Caco-2 (cell line): ENCODE measurements at regions of chr17 and their contacts with region 1.

Region 1: GRCh38 chr17:56939901-56940343 is 20.9 kb downstream of the COIL start:
- DNase-seq: peak in 1 of 2 experiments; percentile 76
- H3K4me3 ChIP-seq: no peak overlapping the region
- H3K4me3 Mint-ChIP-seq: no peak overlapping the region
- H3K27ac Mint-ChIP-seq: no peak overlapping the region
- H3K4me1 ChIP-seq: no peaks in the 10 kb centered on the region
- H3K4me1 Mint-ChIP-seq: peaks cover 6% of the 10 kb centered on the region
- H3K27me3 ChIP-seq: no peaks in the 10 kb centered on the region
- H3K27me3 Mint-ChIP-seq: no peaks in the 10 kb centered on the region
- CTCF ChIP-seq: peak; percentile 62 to 84

Region 2: GRCh38 chr17:56597495-56597990 is 342.4 kb before region 1 on chr17:
- CTCF ChIA-PET with region 1: no interaction called
- POLR2A ChIA-PET with region 1: no interaction called
- intact Hi-C with region 1: no loop called
- DNase-seq: no peak
- H3K4me3 ChIP-seq: no peak overlapping the region
- H3K4me3 Mint-ChIP-seq: peak overlapping the region; percentile 74
- H3K27ac Mint-ChIP-seq: no peak overlapping the region
- H3K4me1 ChIP-seq: peaks cover 29% of the 10 kb centered on the region
- H3K4me1 Mint-ChIP-seq: no peaks in the 10 kb centered on the region
- H3K27me3 ChIP-seq: peaks cover 9% of the 10 kb centered on the region
- H3K27me3 Mint-ChIP-seq: peaks cover 27% of the 10 kb centered on the region
- CTCF ChIP-seq: no peak

Region 3: DNA sequence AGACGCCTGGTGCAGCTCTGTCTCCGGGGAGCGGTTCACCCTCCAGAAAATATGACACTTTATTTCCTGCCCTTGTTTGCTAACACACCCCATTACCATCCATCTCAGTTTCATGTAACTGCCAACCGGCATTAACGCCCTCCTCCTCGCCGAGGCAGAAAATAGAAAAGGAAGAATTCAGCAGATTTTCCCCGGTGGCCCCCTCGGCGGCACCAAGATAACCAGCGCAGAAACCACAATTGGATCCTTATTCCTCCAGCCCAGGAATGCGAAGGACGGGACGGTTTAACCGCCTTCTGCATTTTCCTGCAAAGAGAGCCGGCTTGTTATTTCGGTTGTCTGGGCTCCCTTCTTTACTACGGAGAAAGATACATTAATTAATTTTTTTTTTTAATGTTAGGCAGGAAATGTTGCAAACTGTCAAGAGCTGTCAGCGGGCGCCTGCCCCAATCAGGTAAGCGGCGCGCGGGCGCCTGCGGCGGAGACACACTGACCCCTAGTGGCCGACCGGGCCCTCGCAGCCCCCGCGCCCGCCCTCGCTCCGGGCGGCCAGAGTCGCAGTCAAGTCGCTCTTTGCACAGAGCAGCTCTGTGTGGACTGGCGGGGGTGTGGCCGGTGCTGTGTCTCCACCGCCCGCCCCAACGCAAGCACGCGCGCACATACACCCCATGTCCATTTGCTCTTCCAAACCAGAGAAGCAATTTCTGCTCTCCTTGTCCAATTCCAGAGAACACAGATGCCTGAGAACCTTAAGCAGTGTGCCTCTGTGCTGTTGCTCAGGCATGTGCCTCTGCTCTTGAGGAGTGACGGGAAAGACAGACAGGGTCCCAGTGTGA is 159.8 kb before region 1 on chr17:
- CTCF ChIA-PET with region 1: no interaction called
- POLR2A ChIA-PET with region 1: no interaction called
- intact Hi-C with region 1: loop called (anchors 1 kb)
- DNase-seq: peak; percentile 75 to 90
- H3K4me3 ChIP-seq: peak overlapping the region; percentile 4; the same call in 1 of the 2 replicates
- H3K4me3 Mint-ChIP-seq: peak overlapping the region; percentile 54
- H3K27ac Mint-ChIP-seq: no peak overlapping the region
- H3K4me1 ChIP-seq: peaks cover 5% of the 10 kb centered on the region; the same call in 1 of the 2 replicates
- H3K4me1 Mint-ChIP-seq: peaks cover 6% of the 10 kb centered on the region
- H3K27me3 ChIP-seq: peaks cover 2% of the 10 kb centered on the region
- H3K27me3 Mint-ChIP-seq: peaks cover 34% of the 10 kb centered on the region
- CTCF ChIP-seq: peak; percentile 90 to 98

Region 4: GRCh38 chr17:56866496-56866895 is 73.4 kb before region 1 on chr17:
- CTCF ChIA-PET with region 1: no interaction called
- POLR2A ChIA-PET with region 1: no interaction called
- intact Hi-C with region 1: loop called (anchors 5 kb)
- DNase-seq: no peak
- H3K4me3 ChIP-seq: no peak overlapping the region
- H3K4me3 Mint-ChIP-seq: no peak overlapping the region
- H3K27ac Mint-ChIP-seq: no peak overlapping the region
- H3K4me1 ChIP-seq: 0 out of 2 replicates have a peak, but pooled peaks cover 6% of the 10 kb centered on the region
- H3K4me1 Mint-ChIP-seq: no peaks in the 10 kb centered on the region
- H3K27me3 ChIP-seq: no peaks in the 10 kb centered on the region
- H3K27me3 Mint-ChIP-seq: no peaks in the 10 kb centered on the region
- CTCF ChIP-seq: peak in 1 of 2 experiments; percentile 17